Activated T-helper 2 cell treated with anti-CD3 and anti-CD28 coated beads, Interferon-gamma antibody, Interleukin-2, Interleukin-4, amounts not matched to agents 10 μg/mL and 5 μg/mL and 100 μg/mL, durations not matched to agents 14 hours and 24 hours and 36 hours (primary cell): ENCODE measurements at regions of chr11 and their contacts with region 1.

Region 1: GRCh38 chr11:46537537-46538295 is 56.1 kb downstream of the AMBRA1 start:
- DNase-seq: peak; percentile 39
- H3K4me3 Mint-ChIP-seq: no peak overlapping the region
- H3K27ac Mint-ChIP-seq: no peak overlapping the region
- H3K4me1 Mint-ChIP-seq: peaks cover 11% of the 10 kb centered on the region
- H3K27me3 Mint-ChIP-seq: no peaks in the 10 kb centered on the region

Region 2: DNA sequence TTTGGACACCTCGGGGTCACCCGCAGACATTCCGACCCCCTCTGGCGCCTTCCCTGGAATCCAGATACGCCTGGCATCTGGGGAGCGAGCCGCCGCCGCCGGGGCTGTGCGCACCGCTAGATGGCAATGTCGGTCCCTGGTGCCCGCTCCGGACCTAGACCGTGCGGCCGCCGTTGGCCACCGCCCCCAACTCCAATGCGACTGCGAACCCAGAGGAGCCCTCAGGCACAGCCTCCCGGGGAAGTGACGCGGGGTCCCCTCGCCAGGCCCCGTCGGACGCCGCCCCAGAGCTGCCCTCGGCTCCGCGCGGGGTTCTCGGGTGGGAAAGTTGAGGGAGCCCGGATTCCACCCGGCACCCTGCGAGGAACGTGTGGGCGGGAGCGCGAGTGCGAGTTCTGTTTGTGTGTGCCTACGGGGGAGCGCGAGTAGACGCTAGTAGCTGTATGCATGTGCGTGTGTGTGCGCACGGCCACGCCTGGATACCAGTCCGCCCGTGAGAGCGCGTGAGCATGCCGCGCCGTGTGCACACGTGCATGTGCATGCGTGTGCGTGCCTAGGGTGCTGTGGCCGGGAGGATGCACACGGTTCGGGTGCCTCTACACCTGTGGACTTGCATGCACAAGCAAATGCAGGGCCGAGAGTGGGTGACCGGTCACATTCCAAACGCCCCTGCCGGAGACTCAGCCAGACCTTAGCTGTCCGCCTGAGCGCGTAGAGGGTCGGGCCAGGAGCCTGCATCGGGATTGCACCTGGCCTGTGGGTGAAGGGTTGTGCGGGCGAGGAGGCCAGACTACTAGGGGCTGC is 148.1 kb before region 1 on chr11:
- intact Hi-C with region 1: loop called (anchors 1 kb)
- DNase-seq: peak; percentile 50
- H3K4me3 Mint-ChIP-seq: peak overlapping the region; percentile 13
- H3K27ac Mint-ChIP-seq: no peak overlapping the region
- H3K4me1 Mint-ChIP-seq: peaks cover 18% of the 10 kb centered on the region
- H3K27me3 Mint-ChIP-seq: peaks cover 63% of the 10 kb centered on the region

Region 3: GRCh38 chr11:46489661-46490560 is 47.8 kb before region 1 on chr11:
- intact Hi-C with region 1: loop called (anchors 5 kb)
- DNase-seq: peak; percentile 13
- H3K4me3 Mint-ChIP-seq: no peak overlapping the region
- H3K27ac Mint-ChIP-seq: no peak overlapping the region
- H3K4me1 Mint-ChIP-seq: peaks cover 2% of the 10 kb centered on the region
- H3K27me3 Mint-ChIP-seq: no peaks in the 10 kb centered on the region

Region 4: GRCh38 chr11:46649180-46649738 is 111.5 kb after region 1 on chr11:
- intact Hi-C with region 1: no loop called
- DNase-seq: no peak
- H3K4me3 Mint-ChIP-seq: no peak overlapping the region
- H3K27ac Mint-ChIP-seq: no peak overlapping the region
- H3K4me1 Mint-ChIP-seq: no peaks in the 10 kb centered on the region
- H3K27me3 Mint-ChIP-seq: no peaks in the 10 kb centered on the region